Naive thymus-derived CD4-positive, alpha-beta T cell (primary cell): ENCODE measurements at regions of chr5 and their contacts with region 1.

Region 1: GRCh38 chr5:83718195-83718825 is 2.3 kb downstream of the HAPLN1 start:
- DNase-seq: peak in 6 of 9 donors; percentile 2 to 29 (median 10)
- ATAC-seq: peak; percentile 60
- H3K4me3 ChIP-seq: no peak overlapping the region
- H3K4me3 Mint-ChIP-seq: no peak overlapping the region
- H3K27ac ChIP-seq: no peak overlapping the region
- H3K27ac Mint-ChIP-seq: no peak overlapping the region
- H3K4me1 ChIP-seq: no peaks in the 10 kb centered on the region
- H3K4me1 Mint-ChIP-seq: peaks cover 5 to 18% (median 13%) of the 10 kb centered on the region in 7 donors
- H3K27me3 ChIP-seq: peaks cover 0 to 9% of the 10 kb centered on the region in 2 donors
- H3K27me3 Mint-ChIP-seq: peaks cover 42 to 77% (median 57%) of the 10 kb centered on the region in 5 donors

Region 2: GRCh38 chr5:83632874-83633273 is 85.4 kb before region 1 on chr5:
- CTCF ChIA-PET with region 1: no interaction called
- POLR2A ChIA-PET with region 1: no interaction called
- intact Hi-C with region 1: no loop called
- DNase-seq: peak in 1 of 9 donors; percentile 1
- ATAC-seq: no peak
- H3K4me3 ChIP-seq: no peak overlapping the region
- H3K4me3 Mint-ChIP-seq: no peak overlapping the region
- H3K27ac ChIP-seq: no peak overlapping the region
- H3K27ac Mint-ChIP-seq: no peak overlapping the region
- H3K4me1 ChIP-seq: no peaks in the 10 kb centered on the region
- H3K4me1 Mint-ChIP-seq: no peaks in the 10 kb centered on the region
- H3K27me3 ChIP-seq: no peaks in the 10 kb centered on the region
- H3K27me3 Mint-ChIP-seq: peaks cover 0 to 5% (median 0%) of the 10 kb centered on the region in 5 donors

Region 3: DNA sequence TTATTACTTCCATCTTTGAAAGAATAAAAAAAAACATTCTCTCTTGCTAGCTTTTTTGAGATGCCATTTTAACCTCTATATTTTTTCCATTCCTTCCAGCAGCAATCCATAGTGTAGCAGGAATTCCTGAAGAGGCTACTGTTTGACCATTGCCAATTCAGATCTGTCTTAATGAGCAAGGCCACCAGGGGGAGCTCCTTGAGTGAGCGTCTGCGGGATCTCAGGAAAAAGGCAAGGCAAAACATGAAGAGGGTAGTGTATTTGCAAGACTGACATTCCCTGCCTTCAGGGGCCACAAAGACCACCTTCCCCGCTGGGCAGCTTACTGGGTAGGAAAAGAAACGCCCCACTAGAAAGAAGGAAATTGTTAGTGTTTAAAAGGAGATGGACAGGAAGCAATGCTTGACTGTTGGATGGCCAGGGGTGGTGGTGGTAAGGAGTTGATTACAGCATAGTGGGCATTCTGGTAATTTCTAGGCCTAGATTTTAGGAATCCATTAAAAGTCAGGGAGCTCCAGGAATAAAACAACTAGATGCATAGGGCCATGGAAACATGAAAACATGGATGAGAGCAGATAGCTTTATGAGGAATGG is 208.9 kb after region 1 on chr5:
- CTCF ChIA-PET with region 1: no interaction called
- POLR2A ChIA-PET with region 1: no interaction called
- intact Hi-C with region 1: loop called in 1 of 2 experiments (anchors 5 kb)
- DNase-seq: peak in 4 of 9 donors; percentile 11 to 27 (median 12)
- ATAC-seq: peak; percentile 44
- H3K4me3 ChIP-seq: no peak overlapping the region
- H3K4me3 Mint-ChIP-seq: no peak overlapping the region
- H3K27ac ChIP-seq: no peak overlapping the region
- H3K27ac Mint-ChIP-seq: peak overlapping the region in 1 of 9 donors; percentile 48
- H3K4me1 ChIP-seq: no peaks in the 10 kb centered on the region
- H3K4me1 Mint-ChIP-seq: peaks cover 0 to 4% (median 0%) of the 10 kb centered on the region in 7 donors
- H3K27me3 ChIP-seq: no peaks in the 10 kb centered on the region
- H3K27me3 Mint-ChIP-seq: peaks cover 0 to 9% (median 0%) of the 10 kb centered on the region in 5 donors

Region 4: DNA sequence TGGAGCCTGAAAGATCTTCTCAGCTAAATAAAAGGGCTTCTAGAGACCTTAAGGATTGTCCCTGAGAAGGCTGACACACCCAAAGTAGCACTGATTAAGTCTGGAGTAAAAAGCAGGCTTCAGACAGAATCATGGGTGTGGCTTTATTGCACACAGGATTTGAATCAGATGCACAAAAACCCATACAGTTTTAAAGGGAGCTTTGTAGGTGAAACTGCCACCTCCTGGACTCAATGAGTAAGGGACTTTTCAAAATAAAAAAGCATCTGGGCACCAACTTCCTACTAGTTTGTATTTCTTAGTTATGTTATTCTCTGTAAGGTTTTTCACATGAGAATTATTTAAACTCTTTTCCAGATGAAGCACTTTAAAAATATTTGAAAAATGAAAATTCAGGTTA is 537.0 kb after region 1 on chr5:
- CTCF ChIA-PET with region 1: no interaction called
- POLR2A ChIA-PET with region 1: no interaction called
- intact Hi-C with region 1: loop called in 1 of 2 experiments (anchors 10 kb)
- DNase-seq: no peak
- ATAC-seq: no peak
- H3K4me3 ChIP-seq: no peak overlapping the region
- H3K4me3 Mint-ChIP-seq: no peak overlapping the region
- H3K27ac ChIP-seq: no peak overlapping the region
- H3K27ac Mint-ChIP-seq: no peak overlapping the region
- H3K4me1 ChIP-seq: no peaks in the 10 kb centered on the region
- H3K4me1 Mint-ChIP-seq: no peaks in the 10 kb centered on the region
- H3K27me3 ChIP-seq: no peaks in the 10 kb centered on the region
- H3K27me3 Mint-ChIP-seq: no peaks in the 10 kb centered on the region

Region 5: GRCh38 chr5:84783003-84783402 is 1064.7 kb after region 1 on chr5:
- CTCF ChIA-PET with region 1: no interaction called
- POLR2A ChIA-PET with region 1: no interaction called
- intact Hi-C with region 1: loop called in 1 of 2 experiments (anchors 10 kb)
- DNase-seq: no peak
- ATAC-seq: no peak
- H3K4me3 ChIP-seq: no peak overlapping the region
- H3K4me3 Mint-ChIP-seq: no peak overlapping the region
- H3K27ac ChIP-seq: no peak overlapping the region
- H3K27ac Mint-ChIP-seq: no peak overlapping the region
- H3K4me1 ChIP-seq: no peaks in the 10 kb centered on the region
- H3K4me1 Mint-ChIP-seq: no peaks in the 10 kb centered on the region
- H3K27me3 ChIP-seq: no peaks in the 10 kb centered on the region
- H3K27me3 Mint-ChIP-seq: peaks cover 0 to 3% (median 0%) of the 10 kb centered on the region in 5 donors